Activated CD4-positive, alpha-beta memory T cell treated with anti-CD3 and anti-CD28 coated beads, Interleukin-2, amount 10 ng/mL, durations not matched to agents 7 days and 5 days (primary cell): ENCODE measurements at regions of chr19 and their contacts with region 1.

Region 1: GRCh38 chr19:10864538-10864899 is 6.8 kb upstream of the CARM1 start:
- DNase-seq: peak; percentile 85
- H3K4me3 Mint-ChIP-seq: no peak overlapping the region
- H3K27ac Mint-ChIP-seq: no peak overlapping the region
- H3K4me1 Mint-ChIP-seq: peaks cover 30% of the 10 kb centered on the region
- H3K27me3 Mint-ChIP-seq: no peaks in the 10 kb centered on the region

Region 2: DNA sequence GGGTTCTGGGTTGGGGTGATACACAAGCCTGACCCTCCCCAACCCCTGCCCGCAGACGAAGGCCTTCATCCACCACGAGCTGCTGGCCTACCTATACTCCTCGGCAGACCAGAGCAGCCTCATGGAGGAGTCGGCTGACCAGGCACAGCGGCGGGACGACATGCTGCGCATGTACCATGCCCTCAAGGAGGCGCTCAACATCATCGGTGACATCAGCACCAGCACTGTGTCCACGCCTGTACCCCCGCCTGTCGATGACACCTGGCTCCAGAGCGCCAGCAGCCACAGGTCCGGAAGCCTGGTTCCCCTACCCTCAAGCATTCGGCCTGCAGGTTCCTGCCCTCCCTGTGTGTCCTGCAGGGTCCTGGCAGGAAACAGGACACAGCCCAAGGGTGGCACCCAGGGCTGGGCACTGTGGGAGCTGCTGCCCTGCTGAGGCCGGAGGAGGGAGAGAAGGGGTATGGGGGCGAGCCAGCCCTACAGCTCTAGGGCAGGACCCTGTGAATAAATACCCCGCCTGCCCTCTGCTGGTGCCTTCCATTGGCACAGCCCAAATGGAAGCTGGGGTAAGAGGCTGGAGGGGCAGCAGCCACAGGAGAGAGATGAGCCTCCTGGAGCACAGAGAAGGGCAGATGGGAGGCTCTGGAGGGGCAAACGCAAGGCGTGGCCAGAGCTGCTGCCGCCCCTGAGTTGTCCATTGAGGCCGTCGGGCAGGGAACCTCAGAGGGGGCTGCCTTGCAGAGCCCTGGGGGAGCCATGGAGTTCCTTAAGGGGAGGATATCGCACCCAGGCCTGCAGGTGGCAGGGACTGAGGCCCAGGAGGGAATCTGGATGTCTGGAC is 35.3 kb before region 1 on chr19:
- CTCF ChIA-PET with region 1: interaction called, 12 read pairs
- POLR2A ChIA-PET with region 1: no interaction called
- DNase-seq: no peak
- H3K4me3 Mint-ChIP-seq: no peak overlapping the region
- H3K27ac Mint-ChIP-seq: no peak overlapping the region
- H3K4me1 Mint-ChIP-seq: no peaks in the 10 kb centered on the region
- H3K27me3 Mint-ChIP-seq: no peaks in the 10 kb centered on the region